ENCODE measurements at regions of chr5 and their contacts with region 1.

Region 1: DNA sequence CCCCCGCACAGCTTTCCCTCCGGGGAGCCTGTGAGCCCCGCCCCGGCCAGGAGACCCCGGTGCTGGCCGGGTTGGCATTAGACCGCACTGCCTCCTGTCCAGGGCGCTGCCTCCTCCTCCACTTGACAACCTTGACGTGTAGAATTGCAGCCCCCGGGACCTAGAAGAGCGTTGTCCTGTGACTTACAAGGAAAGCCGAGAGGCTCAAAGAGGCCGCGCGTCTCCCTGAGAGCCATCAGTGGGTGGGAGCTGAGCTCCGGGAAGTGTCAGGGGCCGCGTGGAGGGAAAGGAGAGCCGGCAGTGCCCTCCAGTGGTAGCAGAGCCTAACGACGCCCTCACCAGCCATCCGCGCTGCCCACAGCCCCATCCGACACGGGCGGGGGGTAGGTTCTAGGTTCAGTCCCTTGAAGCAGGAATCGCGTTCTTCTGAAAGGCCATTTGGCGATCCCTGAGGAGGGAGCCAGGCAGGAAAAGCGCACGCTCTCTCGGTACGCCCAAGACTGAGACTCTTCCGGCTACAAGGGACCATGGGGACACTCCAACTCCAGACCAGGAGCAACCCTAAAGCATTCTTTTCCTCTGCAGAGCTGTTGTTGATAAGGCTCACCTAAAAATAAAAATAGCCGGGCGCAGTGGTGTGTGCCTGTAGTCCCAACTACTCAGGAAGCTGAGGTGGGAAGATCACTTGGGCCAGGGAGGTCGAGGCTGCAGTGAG is 40.6 kb upstream of the SAP30L start:
- DNase-seq: peak; percentile 44 to 81 (median 70)
- ATAC-seq: peak; percentile 100
- H3K4me3 ChIP-seq: peak overlapping the region in 1 of 2 experiments; percentile 10
- H3K4me3 Mint-ChIP-seq: peak overlapping the region; percentile 47
- H3K27ac ChIP-seq: no peak overlapping the region
- H3K27ac Mint-ChIP-seq: no peak overlapping the region
- H3K4me1 ChIP-seq: peaks cover 8% of the 10 kb centered on the region
- H3K4me1 Mint-ChIP-seq: peaks cover 9% of the 10 kb centered on the region
- H3K27me3 ChIP-seq: no peaks in the 10 kb centered on the region
- H3K27me3 Mint-ChIP-seq: no peaks in the 10 kb centered on the region
- CTCF ChIP-seq: peak; percentile 81

Region 2: GRCh38 chr5:152532714-152533113 is 1872.5 kb before region 1 on chr5:
- CTCF ChIA-PET with region 1: no interaction called
- POLR2A ChIA-PET with region 1: no interaction called
- intact Hi-C with region 1: loop called in 1 of 2 experiments (anchors 5 kb)
- DNase-seq: peak in 2 of 9 experiments; percentile 42 to 50
- ATAC-seq: no peak
- H3K4me3 ChIP-seq: no peak overlapping the region
- H3K4me3 Mint-ChIP-seq: no peak overlapping the region
- H3K27ac ChIP-seq: no peak overlapping the region
- H3K27ac Mint-ChIP-seq: no peak overlapping the region
- H3K4me1 ChIP-seq: peaks cover 4% of the 10 kb centered on the region
- H3K4me1 Mint-ChIP-seq: peaks cover 4% of the 10 kb centered on the region
- H3K27me3 ChIP-seq: no peaks in the 10 kb centered on the region
- H3K27me3 Mint-ChIP-seq: no peaks in the 10 kb centered on the region
- CTCF ChIP-seq: no peak

Region 3: DNA sequence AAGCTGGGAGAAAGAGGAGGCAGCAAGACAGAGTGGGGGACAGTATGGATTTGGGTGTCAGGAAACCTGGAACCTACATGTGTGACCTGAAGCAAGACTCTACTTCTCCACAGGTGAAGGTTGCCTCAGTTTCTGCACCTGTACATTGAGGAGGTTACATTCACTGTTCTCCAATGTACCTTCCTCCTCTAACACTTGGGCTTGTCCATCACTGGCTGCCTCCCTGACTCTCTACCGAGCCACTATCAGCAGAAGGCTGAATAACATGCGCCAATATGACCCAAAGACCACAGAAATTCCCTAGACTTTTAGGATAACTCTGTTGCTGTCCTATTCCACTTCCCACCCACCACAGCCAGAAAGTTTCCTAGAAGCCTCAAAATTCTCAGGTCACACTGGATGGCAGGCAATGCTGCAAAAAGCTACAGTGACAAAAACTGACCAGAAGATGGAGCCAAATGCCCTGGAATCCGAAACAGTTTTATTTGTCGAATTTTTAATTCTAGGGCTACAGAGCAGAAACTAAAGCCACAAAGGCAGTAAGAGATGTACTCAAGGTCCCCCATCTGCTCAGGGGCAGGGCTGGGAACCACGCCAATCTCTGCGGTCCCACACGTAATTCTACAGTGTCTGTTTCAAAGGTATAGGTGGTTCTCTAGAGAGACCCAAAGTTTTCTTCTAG is 431.0 kb before region 1 on chr5:
- CTCF ChIA-PET with region 1: interaction called, 19 read pairs
- POLR2A ChIA-PET with region 1: no interaction called
- intact Hi-C with region 1: loop called in 1 of 2 experiments (anchors 1 kb)
- DNase-seq: peak in 5 of 9 experiments; percentile 17 to 60 (median 19)
- ATAC-seq: peak; percentile 38
- H3K4me3 ChIP-seq: no peak overlapping the region
- H3K4me3 Mint-ChIP-seq: no peak overlapping the region
- H3K27ac ChIP-seq: no peak overlapping the region
- H3K27ac Mint-ChIP-seq: no peak overlapping the region
- H3K4me1 ChIP-seq: no peaks in the 10 kb centered on the region
- H3K4me1 Mint-ChIP-seq: no peaks in the 10 kb centered on the region
- H3K27me3 ChIP-seq: no peaks in the 10 kb centered on the region
- H3K27me3 Mint-ChIP-seq: peaks cover 13% of the 10 kb centered on the region
- CTCF ChIP-seq: peak; percentile 63

Region 4: GRCh38 chr5:154179846-154180710 is 225.2 kb before region 1 on chr5:
- CTCF ChIA-PET with region 1: interaction called, 7 read pairs
- POLR2A ChIA-PET with region 1: no interaction called
- intact Hi-C with region 1: loop called (anchors 1 to 5 kb)
- DNase-seq: peak in 6 of 9 experiments; percentile 29 to 71 (median 52)
- ATAC-seq: peak; percentile 95
- H3K4me3 ChIP-seq: no peak overlapping the region
- H3K4me3 Mint-ChIP-seq: no peak overlapping the region
- H3K27ac ChIP-seq: no peak overlapping the region
- H3K27ac Mint-ChIP-seq: no peak overlapping the region
- H3K4me1 ChIP-seq: no peaks in the 10 kb centered on the region
- H3K4me1 Mint-ChIP-seq: peaks cover 1% of the 10 kb centered on the region
- H3K27me3 ChIP-seq: peaks cover 0 to 3% of the 10 kb centered on the region in 2 experiments
- H3K27me3 Mint-ChIP-seq: peaks cover 15% of the 10 kb centered on the region
- CTCF ChIP-seq: peak; percentile 70

Region 5: DNA sequence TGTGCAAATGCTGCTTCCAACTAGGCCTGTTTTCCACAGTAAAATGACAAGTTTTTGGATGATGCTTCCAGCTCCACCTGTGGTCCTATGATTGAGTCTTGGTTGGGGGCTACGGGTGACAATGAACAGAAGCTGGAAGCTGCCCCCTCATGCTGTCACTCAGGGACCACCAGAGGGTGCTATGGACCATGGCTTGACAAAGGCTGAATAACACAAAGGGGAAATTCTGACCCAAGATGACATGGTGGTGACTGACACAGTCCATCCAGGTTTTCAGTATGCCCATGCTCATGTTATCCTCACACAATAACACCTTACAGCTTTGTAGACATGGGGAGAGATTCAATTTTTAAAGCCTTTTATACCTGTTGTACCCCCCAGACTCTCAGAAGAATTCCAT is 16.6 kb after region 1 on chr5:
- CTCF ChIA-PET with region 1: interaction called, 14 read pairs
- POLR2A ChIA-PET with region 1: no interaction called
- intact Hi-C with region 1: no loop called
- DNase-seq: peak in 3 of 9 experiments; percentile 23 to 49 (median 34)
- ATAC-seq: no peak
- H3K4me3 ChIP-seq: no peak overlapping the region
- H3K4me3 Mint-ChIP-seq: no peak overlapping the region
- H3K27ac ChIP-seq: no peak overlapping the region
- H3K27ac Mint-ChIP-seq: no peak overlapping the region
- H3K4me1 ChIP-seq: no peaks in the 10 kb centered on the region
- H3K4me1 Mint-ChIP-seq: peaks cover 4% of the 10 kb centered on the region
- H3K27me3 ChIP-seq: no peaks in the 10 kb centered on the region
- H3K27me3 Mint-ChIP-seq: no peaks in the 10 kb centered on the region
- CTCF ChIP-seq: no peak

Measured in CD8-positive, alpha-beta T cell (primary cell).